ENCODE measurements at regions of chr5 and their contacts with region 1.

Region 1: DNA sequence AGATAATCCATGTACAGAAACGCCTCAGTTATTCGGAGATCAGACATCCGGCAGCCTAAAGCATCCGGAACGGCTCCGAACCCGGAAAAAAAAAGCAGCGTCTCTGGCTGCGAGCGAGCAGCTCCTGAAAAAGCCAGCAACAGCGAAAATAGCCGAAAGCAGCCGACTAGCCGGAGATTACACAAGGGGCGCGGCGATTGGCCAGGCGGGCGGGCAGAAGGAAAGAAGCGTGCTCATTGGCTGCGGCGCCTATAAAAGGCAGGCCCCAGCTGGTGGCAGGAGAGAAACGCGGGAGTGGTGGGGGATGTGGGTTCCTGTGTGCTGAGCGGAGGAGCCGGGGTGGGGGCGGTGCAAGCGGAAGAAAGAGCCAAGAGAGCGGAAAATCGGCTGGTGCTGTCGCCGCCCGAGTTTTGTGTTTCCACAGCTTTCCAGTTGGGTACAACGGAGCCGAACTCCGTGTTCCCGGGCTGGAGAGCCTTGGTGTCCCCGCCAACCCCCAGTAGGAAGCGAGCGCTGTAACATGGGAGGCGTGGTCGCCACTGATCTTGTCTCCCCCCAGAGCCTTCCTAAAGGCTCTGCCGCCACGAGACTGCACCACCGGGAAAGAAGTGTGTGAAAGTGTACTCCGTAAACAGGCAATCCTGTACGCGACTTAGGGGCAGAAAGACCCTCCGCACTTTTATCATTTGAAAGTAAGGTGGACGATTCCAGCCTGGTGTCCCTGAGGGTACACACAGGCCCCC is at the start of gene ARL15:
- H3K4me3 ChIP-seq: peak within 1 kb of the TSS; percentile 97
- H3K27ac ChIP-seq: peak within 1 kb of the TSS; percentile 86
- H3K4me1 ChIP-seq: peaks cover 11% of the 10 kb centered on the region
- CTCF ChIP-seq: peak; percentile 43; the same call in 1 of the 2 replicates

Region 2: GRCh38 chr5:54249210-54250028 is 61.2 kb before region 1 on chr5:
- CTCF ChIA-PET with region 1: interaction called, 9 read pairs
- POLR2A ChIA-PET with region 1: interaction called, 37 read pairs
- H3K4me3 ChIP-seq: no peak overlapping the region
- H3K27ac ChIP-seq: no peak overlapping the region
- H3K4me1 ChIP-seq: 0 out of 2 replicates have a peak, but pooled peaks cover 4% of the 10 kb centered on the region
- CTCF ChIP-seq: no peak

Region 3: GRCh38 chr5:54294097-54294667 is 16.4 kb before region 1 on chr5:
- CTCF ChIA-PET with region 1: no interaction called
- POLR2A ChIA-PET with region 1: interaction called, 13 read pairs
- H3K4me3 ChIP-seq: no peak overlapping the region
- H3K27ac ChIP-seq: no peak overlapping the region
- H3K4me1 ChIP-seq: peaks cover 11% of the 10 kb centered on the region
- CTCF ChIP-seq: no peak

Region 4: GRCh38 chr5:54390015-54390414 is 79.4 kb after region 1 on chr5:
- CTCF ChIA-PET with region 1: interaction called, 5 read pairs
- POLR2A ChIA-PET with region 1: interaction called, 49 read pairs
- H3K4me3 ChIP-seq: no peak overlapping the region
- H3K27ac ChIP-seq: peak overlapping the region; percentile 74; the same call in 1 of the 2 replicates
- H3K4me1 ChIP-seq: peaks cover 31% of the 10 kb centered on the region
- CTCF ChIP-seq: no peak

Region 5: DNA sequence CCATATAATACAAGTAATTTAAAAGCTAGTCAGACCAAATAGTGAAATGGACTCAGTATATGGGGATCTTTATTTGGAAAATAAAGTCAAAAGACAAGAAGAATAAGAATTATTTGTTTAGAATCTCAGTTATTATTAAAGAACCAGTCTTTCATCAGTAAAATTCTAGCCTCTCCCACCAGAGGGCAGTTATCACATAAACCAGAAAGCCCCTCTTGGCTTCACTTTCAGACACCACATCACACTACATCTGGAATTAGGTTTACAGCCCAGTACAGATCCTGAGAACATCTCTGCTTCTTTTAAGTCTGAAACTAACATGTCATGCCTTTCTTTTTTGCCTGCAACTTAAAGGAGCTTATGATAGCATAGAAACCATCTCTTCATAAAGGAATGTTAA is 132.7 kb after region 1 on chr5:
- CTCF ChIA-PET with region 1: interaction called, 10 read pairs
- POLR2A ChIA-PET with region 1: interaction called, 4 read pairs
- H3K4me3 ChIP-seq: no peak overlapping the region
- H3K27ac ChIP-seq: no peak overlapping the region
- H3K4me1 ChIP-seq: no peaks in the 10 kb centered on the region
- CTCF ChIP-seq: 0 out of 2 replicates have a peak, but pooled peaks have one; percentile 20

Measured in HEK293 (cell line).